Thyroid gland (tissue), 4 donors: ENCODE measurements at regions of chr10 and their contacts with region 1.

Region 1: GRCh38 chr10:59177031-59177797 is 771 bp downstream of the PHYHIPL start:
- DNase-seq: peak in 1 of 2 donors; percentile 2
- H3K4me3 ChIP-seq: peak overlapping the region in 1 of 3 donors; percentile 9
- H3K27ac ChIP-seq: no peak overlapping the region
- H3K4me1 ChIP-seq: peaks cover 0 to 15% of the 10 kb centered on the region in 2 donors
- H3K27me3 ChIP-seq: peaks cover 3% of the 10 kb centered on the region
- CTCF ChIP-seq: no peak
- POLR2A ChIP-seq: no peak

Region 2: GRCh38 chr10:58952747-58953466 is 224.3 kb before region 1 on chr10:
- intact Hi-C with region 1: loop called (anchors 10 kb)
- DNase-seq: peak; percentile 43 to 44
- H3K4me3 ChIP-seq: no peak overlapping the region
- H3K27ac ChIP-seq: peak overlapping the region in 1 of 3 donors; percentile 65
- H3K4me1 ChIP-seq: no peaks in the 10 kb centered on the region
- H3K27me3 ChIP-seq: no peaks in the 10 kb centered on the region
- CTCF ChIP-seq: peak; percentile 46 to 81 (median 68)
- POLR2A ChIP-seq: no peak